CD14-positive monocyte (primary cell): ENCODE measurements at regions of chr17 and their contacts with region 1.

Region 1: DNA sequence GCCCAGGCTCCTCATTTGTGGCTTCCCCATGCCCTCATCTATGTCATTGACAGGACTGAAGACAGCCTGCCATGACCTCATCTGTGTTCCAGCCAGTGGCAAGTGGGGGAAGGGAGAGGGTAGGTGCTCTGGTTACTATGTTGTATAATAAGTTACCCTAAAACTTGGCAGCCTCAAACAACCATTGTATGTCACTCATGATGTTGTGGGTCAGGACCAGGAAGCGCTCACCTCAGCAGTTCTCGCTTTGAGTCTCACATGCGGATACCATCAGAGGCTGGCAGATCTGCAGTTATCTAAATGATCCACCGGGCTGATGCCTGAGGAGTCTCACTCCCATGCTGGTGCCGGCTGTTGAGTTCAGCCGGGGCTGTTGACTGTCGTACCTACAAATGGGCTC is 89.0 kb upstream of the TMEM97 start:
- DNase-seq: no peak
- H3K4me3 ChIP-seq: no peak overlapping the region
- H3K4me3 Mint-ChIP-seq: peak overlapping the region in 1 of 2 donors; percentile 32
- H3K27ac ChIP-seq: no peak overlapping the region
- H3K27ac Mint-ChIP-seq: no peak overlapping the region
- H3K4me1 ChIP-seq: peaks cover 13 to 14% of the 10 kb centered on the region in 2 donors
- H3K4me1 Mint-ChIP-seq: peaks cover 13% of the 10 kb centered on the region
- H3K27me3 ChIP-seq: peaks cover 19 to 47% of the 10 kb centered on the region in 2 donors
- H3K27me3 Mint-ChIP-seq: peaks cover 47 to 57% (median 52%) of the 10 kb centered on the region in 3 donors
- CTCF ChIP-seq: no peak

Region 2: GRCh38 chr17:27956601-27957445 is 273.2 kb before region 1 on chr17:
- intact Hi-C with region 1: no loop called
- DNase-seq: no peak
- H3K4me3 ChIP-seq: no peak overlapping the region
- H3K4me3 Mint-ChIP-seq: no peak overlapping the region
- H3K27ac ChIP-seq: no peak overlapping the region
- H3K27ac Mint-ChIP-seq: no peak overlapping the region
- H3K4me1 ChIP-seq: no peaks in the 10 kb centered on the region
- H3K4me1 Mint-ChIP-seq: no peaks in the 10 kb centered on the region
- H3K27me3 ChIP-seq: no peaks in the 10 kb centered on the region
- H3K27me3 Mint-ChIP-seq: peaks cover 0 to 5% (median 2%) of the 10 kb centered on the region in 3 donors
- CTCF ChIP-seq: no peak

Region 3: DNA sequence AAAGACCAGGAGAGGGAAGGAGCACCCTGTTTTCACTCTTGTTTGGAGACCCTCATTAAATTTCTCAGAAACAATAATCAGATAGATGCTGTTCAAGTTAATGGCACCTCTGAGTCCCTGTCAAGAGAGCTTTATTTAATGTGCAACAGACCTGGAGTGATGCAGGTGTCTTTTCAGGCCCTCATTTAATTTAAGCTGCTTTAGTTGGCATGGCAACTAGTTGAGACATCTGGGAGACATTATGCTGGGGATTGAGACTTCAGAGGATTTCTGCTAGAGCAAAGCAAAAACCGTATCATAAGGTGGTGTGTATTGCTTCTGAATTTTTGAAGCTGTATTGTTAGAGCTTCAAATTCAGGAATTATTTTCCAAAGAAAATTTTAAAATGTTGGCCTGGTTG is 79.0 kb before region 1 on chr17:
- intact Hi-C with region 1: no loop called
- DNase-seq: no peak
- H3K4me3 ChIP-seq: no peak overlapping the region
- H3K4me3 Mint-ChIP-seq: no peak overlapping the region
- H3K27ac ChIP-seq: no peak overlapping the region
- H3K27ac Mint-ChIP-seq: no peak overlapping the region
- H3K4me1 ChIP-seq: no peaks in the 10 kb centered on the region
- H3K4me1 Mint-ChIP-seq: no peaks in the 10 kb centered on the region
- H3K27me3 ChIP-seq: no peaks in the 10 kb centered on the region
- H3K27me3 Mint-ChIP-seq: no peaks in the 10 kb centered on the region
- CTCF ChIP-seq: no peak

Region 4: DNA sequence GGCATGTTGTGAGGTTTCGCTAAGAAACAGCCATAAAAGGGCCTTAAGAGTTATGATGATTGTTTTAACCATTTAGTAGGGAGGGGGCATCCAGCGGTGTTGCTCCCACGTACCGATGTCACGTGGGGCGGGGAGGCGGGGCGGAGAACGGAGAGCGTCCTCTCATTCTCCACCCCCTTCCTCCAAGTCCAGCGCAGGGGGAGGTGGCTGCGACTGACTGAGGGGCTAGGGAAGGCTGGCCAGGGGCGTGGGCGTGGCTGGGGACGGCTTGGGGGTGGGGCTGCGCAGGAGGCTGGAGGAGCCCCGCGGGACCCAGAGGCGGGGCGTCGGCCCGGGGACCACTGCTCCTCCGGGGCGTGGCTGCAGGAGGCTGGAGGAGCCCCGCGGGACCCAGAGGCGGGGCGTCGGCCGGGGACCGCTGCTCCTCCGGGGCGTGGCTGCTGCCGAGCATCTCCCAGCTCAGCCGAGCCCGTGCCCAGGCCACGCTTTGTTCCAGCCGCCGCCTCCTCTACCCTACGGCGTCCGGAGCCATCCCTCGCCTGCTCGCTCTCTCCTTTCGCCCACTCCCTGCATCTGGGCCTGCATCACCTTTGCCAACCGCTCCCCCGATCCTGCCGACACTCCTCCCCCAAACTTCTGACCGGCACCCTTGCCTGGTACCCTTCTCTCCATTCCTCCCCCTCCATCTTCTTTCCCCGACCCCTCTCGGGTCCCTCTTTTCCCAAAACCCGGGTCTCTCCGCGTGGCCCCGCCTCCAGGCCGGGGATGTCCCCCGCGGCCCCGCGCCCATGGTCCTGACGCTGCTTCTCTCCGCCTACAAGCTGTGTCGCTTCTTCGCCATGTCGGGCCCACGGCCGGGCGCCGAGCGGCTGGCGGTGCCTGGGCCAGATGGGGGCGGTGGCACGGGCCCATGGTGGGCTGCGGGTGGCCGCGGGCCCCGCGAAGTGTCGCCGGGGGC is 141.5 kb after region 1 on chr17 and contains the start of gene SARM1:
- intact Hi-C with region 1: no loop called
- DNase-seq: peak in 2 of 3 donors; percentile 23 to 29
- H3K4me3 ChIP-seq: peak within 1 kb of the TSS; percentile 14 to 74 (median 36)
- H3K4me3 Mint-ChIP-seq: peak within 1 kb of the TSS; percentile 80 to 87
- H3K27ac ChIP-seq: no peak within 1 kb of the TSS
- H3K27ac Mint-ChIP-seq: peak within 1 kb of the TSS in 4 of 7 donors; percentile 10 to 63 (median 52)
- H3K4me1 ChIP-seq: peaks cover 23 to 34% of the 10 kb centered on the region in 2 donors
- H3K4me1 Mint-ChIP-seq: peaks cover 27% of the 10 kb centered on the region
- H3K27me3 ChIP-seq: peaks cover 13 to 20% of the 10 kb centered on the region in 2 donors
- H3K27me3 Mint-ChIP-seq: peaks cover 22 to 44% (median 25%) of the 10 kb centered on the region in 3 donors
- CTCF ChIP-seq: no peak
- polyA plus RNA-seq, gene SARM1: 0.78 to 7.1 (median 0.90) TPM

Region 5: GRCh38 chr17:28416703-28417311 is 186.8 kb after region 1 on chr17:
- intact Hi-C with region 1: loop called in 1 of 2 experiments (anchors 10 kb)
- DNase-seq: peak; percentile 32 to 48 (median 47)
- H3K4me3 ChIP-seq: no peak overlapping the region
- H3K4me3 Mint-ChIP-seq: no peak overlapping the region
- H3K27ac ChIP-seq: no peak overlapping the region
- H3K27ac Mint-ChIP-seq: no peak overlapping the region
- H3K4me1 ChIP-seq: no peaks in the 10 kb centered on the region
- H3K4me1 Mint-ChIP-seq: peaks cover 6% of the 10 kb centered on the region
- H3K27me3 ChIP-seq: no peaks in the 10 kb centered on the region
- H3K27me3 Mint-ChIP-seq: peaks cover 4 to 11% (median 4%) of the 10 kb centered on the region in 3 donors
- CTCF ChIP-seq: peak; percentile 86